CD8-positive, alpha-beta T cell (primary cell): ENCODE measurements at regions of chrX and their contacts with region 1.

Region 1: DNA sequence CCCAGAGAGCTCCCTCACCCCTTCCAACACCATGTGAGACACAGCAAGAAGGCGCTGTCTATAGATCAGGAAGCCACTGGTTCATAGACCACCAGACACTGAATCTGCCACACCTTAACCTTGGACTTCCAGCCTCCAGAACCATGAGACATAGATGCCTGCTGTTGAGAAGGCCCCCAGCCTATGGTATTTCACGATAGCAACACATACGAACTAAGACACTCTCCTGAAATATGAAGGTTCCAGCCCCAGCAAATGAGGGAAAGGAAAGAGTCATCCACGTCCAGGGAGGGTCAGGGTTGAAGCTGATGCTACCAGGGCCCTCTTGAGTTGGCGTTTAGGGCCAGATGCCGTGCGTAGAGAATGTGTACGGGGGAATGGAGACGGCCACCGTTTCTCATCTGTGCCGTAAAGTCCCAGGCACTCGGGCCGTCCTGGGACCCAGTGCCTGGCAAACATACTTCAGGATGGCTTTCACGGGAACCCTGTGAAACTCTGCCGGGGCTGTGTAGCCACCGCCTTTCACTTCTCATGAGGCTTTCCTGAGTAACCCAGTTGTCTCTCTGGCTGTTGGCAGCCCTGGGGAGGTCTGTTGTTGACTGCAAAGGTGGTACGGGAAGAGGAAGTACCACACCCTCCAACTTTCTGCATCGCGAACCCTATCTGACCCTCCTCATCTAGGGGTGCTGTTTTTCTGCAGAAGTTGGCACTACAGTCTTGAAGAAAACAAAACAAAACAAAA is 17.7 kb upstream of the P2RY8 start:
- DNase-seq: peak; percentile 40 to 86 (median 73)
- ATAC-seq: peak; percentile 97
- H3K4me3 ChIP-seq: peak overlapping the region in 1 of 2 experiments; percentile 4
- H3K4me3 Mint-ChIP-seq: peak overlapping the region; percentile 66
- H3K27ac ChIP-seq: peak overlapping the region; percentile 61 to 81
- H3K27ac Mint-ChIP-seq: peak overlapping the region; percentile 96
- H3K4me1 ChIP-seq: peaks cover 52% of the 10 kb centered on the region
- H3K4me1 Mint-ChIP-seq: peaks cover 57% of the 10 kb centered on the region
- H3K27me3 ChIP-seq: no peaks in the 10 kb centered on the region
- H3K27me3 Mint-ChIP-seq: no peaks in the 10 kb centered on the region
- CTCF ChIP-seq: no peak

Region 2: GRCh38 chrX:1491851-1492349 is 62.7 kb before region 1 on chrX:
- CTCF ChIA-PET with region 1: no interaction called
- POLR2A ChIA-PET with region 1: no interaction called
- intact Hi-C with region 1: no loop called
- DNase-seq: peak in 5 of 9 experiments; percentile 41 to 78 (median 68)
- ATAC-seq: peak; percentile 64
- H3K4me3 ChIP-seq: no peak overlapping the region
- H3K4me3 Mint-ChIP-seq: no peak overlapping the region
- H3K27ac ChIP-seq: peak overlapping the region in 1 of 2 experiments; percentile 8
- H3K27ac Mint-ChIP-seq: peak overlapping the region; percentile 80
- H3K4me1 ChIP-seq: peaks cover 11% of the 10 kb centered on the region
- H3K4me1 Mint-ChIP-seq: peaks cover 23% of the 10 kb centered on the region
- H3K27me3 ChIP-seq: no peaks in the 10 kb centered on the region
- H3K27me3 Mint-ChIP-seq: no peaks in the 10 kb centered on the region
- CTCF ChIP-seq: no peak

Region 3: GRCh38 chrX:1564750-1565683 is 10.4 kb after region 1 on chrX:
- CTCF ChIA-PET with region 1: no interaction called
- POLR2A ChIA-PET with region 1: no interaction called
- intact Hi-C with region 1: loop called in 1 of 2 experiments (anchors 1 kb)
- DNase-seq: peak in 2 of 9 experiments; percentile 11 to 39
- ATAC-seq: no peak
- H3K4me3 ChIP-seq: no peak overlapping the region
- H3K4me3 Mint-ChIP-seq: no peak overlapping the region
- H3K27ac ChIP-seq: no peak overlapping the region
- H3K27ac Mint-ChIP-seq: no peak overlapping the region
- H3K4me1 ChIP-seq: peaks cover 36% of the 10 kb centered on the region
- H3K4me1 Mint-ChIP-seq: peaks cover 43% of the 10 kb centered on the region
- H3K27me3 ChIP-seq: no peaks in the 10 kb centered on the region
- H3K27me3 Mint-ChIP-seq: no peaks in the 10 kb centered on the region
- CTCF ChIP-seq: no peak

Region 4: DNA sequence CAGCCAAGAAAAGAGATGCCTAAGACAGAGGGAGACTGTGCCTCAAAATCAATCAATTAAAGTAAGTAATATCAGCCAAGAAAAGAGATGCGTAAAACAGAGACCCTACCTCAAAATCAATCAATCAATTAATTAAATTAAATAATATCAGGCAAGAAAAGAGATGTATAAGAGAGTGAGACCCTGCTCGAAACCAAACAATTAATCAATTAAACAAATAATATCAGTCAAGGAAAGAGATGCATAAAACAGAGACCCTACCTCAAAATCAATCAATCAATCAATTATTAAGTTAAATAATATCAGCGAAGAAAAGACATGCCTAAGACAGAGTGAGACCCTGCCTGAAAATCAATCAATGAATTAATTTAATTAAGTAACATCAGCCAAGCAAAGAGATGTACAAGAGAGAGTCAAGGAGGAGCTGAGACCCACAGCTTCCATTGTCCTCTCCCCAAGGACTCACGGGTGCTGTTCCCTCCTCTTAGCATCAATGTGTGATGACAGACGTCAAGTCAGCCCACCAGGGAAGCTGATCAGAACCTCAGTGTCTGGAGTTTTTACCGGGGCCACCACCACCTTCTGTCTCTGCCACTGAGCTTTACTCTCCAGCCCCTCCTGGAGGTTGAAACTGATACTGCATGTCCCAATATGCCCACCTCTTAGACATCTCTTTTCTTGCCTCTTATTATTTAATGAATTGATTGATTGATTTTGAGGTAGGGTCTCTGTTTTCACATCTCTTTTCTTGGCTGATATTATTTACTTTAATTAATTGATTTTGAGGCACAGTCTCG is 26.3 kb after region 1 on chrX:
- CTCF ChIA-PET with region 1: no interaction called
- POLR2A ChIA-PET with region 1: no interaction called
- intact Hi-C with region 1: loop called in 1 of 2 experiments (anchors 2 kb)
- DNase-seq: peak; percentile 48 to 85 (median 72)
- ATAC-seq: peak; percentile 92
- H3K4me3 ChIP-seq: no peak overlapping the region
- H3K4me3 Mint-ChIP-seq: no peak overlapping the region
- H3K27ac ChIP-seq: no peak overlapping the region
- H3K27ac Mint-ChIP-seq: no peak overlapping the region
- H3K4me1 ChIP-seq: peaks cover 43% of the 10 kb centered on the region
- H3K4me1 Mint-ChIP-seq: peaks cover 10% of the 10 kb centered on the region
- H3K27me3 ChIP-seq: no peaks in the 10 kb centered on the region
- H3K27me3 Mint-ChIP-seq: no peaks in the 10 kb centered on the region
- CTCF ChIP-seq: peak; percentile 85

Region 5: DNA sequence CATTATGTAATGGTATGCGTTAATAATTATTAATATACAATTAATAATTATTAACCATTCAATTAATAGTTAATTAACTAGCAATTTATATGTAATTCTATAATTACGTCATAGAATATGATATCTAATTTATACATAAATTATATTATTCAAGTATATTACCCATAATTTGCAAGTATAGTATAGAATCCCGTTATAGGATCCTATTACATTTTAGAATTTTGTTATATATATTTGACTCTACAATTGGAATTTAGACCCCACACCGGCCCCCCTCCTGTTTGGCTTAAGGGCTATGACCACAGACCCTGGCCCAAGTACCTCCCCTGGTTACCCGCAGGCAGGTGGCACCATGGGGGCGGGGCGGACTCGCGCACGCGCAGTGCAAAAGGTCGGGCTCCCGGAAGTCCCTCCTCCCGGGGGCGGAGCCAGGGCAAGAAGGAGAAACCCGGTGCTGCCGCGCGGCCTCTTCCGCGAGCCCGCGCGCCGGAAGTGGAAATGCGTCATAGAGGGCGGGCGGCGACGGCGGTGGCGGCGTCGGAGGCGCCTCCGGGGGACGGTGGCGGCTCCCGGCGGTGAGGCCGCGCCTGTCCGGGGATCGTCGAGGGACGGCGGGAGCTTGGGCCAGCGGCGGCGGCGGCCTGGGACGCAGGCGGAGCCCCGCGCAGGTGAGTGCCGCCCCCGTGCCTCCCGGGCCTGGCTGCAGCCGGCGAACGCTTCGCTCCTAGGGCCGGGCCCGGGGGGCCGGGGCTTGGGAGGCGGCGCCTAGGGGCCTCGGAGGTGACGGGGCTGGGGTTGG is 36.7 kb after region 1 on chrX and contains the start of gene AKAP17A:
- CTCF ChIA-PET with region 1: no interaction called
- POLR2A ChIA-PET with region 1: no interaction called
- intact Hi-C with region 1: loop called in 1 of 2 experiments (anchors 2 kb)
- DNase-seq: peak; percentile 95 to 100 (median 98)
- ATAC-seq: peak; percentile 88
- H3K4me3 ChIP-seq: peak within 1 kb of the TSS; percentile 82 to 85
- H3K4me3 Mint-ChIP-seq: peak within 1 kb of the TSS; percentile 90
- H3K27ac ChIP-seq: peak within 1 kb of the TSS; percentile 71 to 79
- H3K27ac Mint-ChIP-seq: peak within 1 kb of the TSS; percentile 91
- H3K4me1 ChIP-seq: peaks cover 35% of the 10 kb centered on the region
- H3K4me1 Mint-ChIP-seq: peaks cover 39% of the 10 kb centered on the region
- H3K27me3 ChIP-seq: no peaks in the 10 kb centered on the region
- H3K27me3 Mint-ChIP-seq: no peaks in the 10 kb centered on the region
- CTCF ChIP-seq: no peak
- total RNA-seq, gene AKAP17A: 193 to 209 TPM